Gastrocnemius medialis (tissue), 4 donors: ENCODE measurements at regions of chr3 and their contacts with region 1.

Region 1: DNA sequence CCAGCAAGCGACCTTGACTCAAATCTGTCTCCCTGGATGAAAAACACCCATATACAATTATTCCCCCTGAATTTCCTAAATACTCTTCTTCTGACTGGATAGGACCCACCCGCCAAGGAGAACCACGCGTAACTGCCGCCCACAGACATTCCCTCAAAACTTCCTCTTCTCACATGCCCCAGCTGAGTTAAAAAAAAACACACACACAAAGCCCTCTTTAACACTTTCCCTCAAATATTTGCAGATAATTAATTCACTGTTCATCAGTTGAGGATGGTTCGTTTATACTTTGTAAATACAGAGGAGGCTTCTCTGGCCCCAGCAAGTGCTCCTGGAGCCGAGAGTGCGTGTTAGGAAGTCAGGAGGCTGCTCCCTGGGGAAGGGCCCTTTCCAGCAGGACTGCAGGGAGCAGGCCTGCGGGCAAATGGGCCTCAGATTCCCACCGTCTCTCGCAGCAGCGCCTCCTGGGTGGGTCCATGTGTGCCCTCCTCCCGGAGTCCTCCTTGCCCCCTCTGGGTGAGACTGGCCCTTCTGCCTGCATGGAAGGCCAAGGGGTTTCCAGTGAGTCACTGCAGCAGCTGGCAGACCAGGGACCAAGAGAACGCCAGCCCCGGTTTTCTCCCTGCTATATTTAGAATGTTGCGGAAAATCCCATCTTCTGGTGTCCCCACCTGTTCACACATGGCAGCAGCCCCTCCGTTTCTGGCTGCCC is 46.8 kb downstream of the MGLL start:
- DNase-seq: peak in 1 of 2 donors; percentile 79
- ATAC-seq: peak; percentile 65 to 70
- H3K4me3 ChIP-seq: peak overlapping the region in 1 of 4 donors; percentile 10
- H3K27ac ChIP-seq: peak overlapping the region; percentile 76 to 87 (median 81)
- H3K4me1 ChIP-seq: peaks cover 58 to 74% of the 10 kb centered on the region in 2 donors
- H3K27me3 ChIP-seq: no peaks in the 10 kb centered on the region
- CTCF ChIP-seq: no peak
- POLR2A ChIP-seq: no peak

Region 2: DNA sequence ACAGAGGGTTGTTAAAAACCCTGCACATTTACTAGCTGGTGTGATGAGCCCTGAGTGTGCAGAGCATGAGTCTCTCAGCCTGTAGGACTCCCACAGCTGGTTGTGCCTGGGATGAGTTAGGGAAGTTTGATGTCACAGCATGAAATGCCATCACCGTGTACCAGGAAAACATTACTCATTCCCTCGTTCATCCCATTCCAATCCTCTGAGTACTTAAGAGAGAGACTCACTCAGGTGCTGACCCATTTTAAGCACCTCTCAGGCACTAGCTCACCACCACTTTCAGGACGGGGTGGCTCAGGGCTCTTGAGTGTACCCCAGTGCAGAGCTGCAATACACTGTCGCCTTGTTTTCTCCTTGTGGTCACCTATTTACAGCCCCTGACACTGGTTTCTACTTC is 28.1 kb after region 1 on chr3:
- in situ Hi-C with region 1: no loop called
- intact Hi-C with region 1: no loop called
- DNase-seq: no peak
- ATAC-seq: peak; percentile 85 to 91
- H3K4me3 ChIP-seq: no peak overlapping the region
- H3K27ac ChIP-seq: peak overlapping the region in 3 of 4 donors; percentile 14 to 18 (median 16)
- H3K4me1 ChIP-seq: peaks cover 35 to 56% of the 10 kb centered on the region in 2 donors
- H3K27me3 ChIP-seq: no peaks in the 10 kb centered on the region
- CTCF ChIP-seq: no peak
- POLR2A ChIP-seq: no peak

Region 3: GRCh38 chr3:127817396-127817841 is 41.9 kb after region 1 on chr3:
- in situ Hi-C with region 1: no loop called
- intact Hi-C with region 1: loop called (anchors 5 kb)
- DNase-seq: peak; percentile 53 to 73
- ATAC-seq: peak; percentile 97 to 98
- H3K4me3 ChIP-seq: no peak overlapping the region
- H3K27ac ChIP-seq: peak overlapping the region; percentile 80 to 92 (median 84)
- H3K4me1 ChIP-seq: peaks cover 74 to 89% of the 10 kb centered on the region in 2 donors
- H3K27me3 ChIP-seq: no peaks in the 10 kb centered on the region
- CTCF ChIP-seq: no peak
- POLR2A ChIP-seq: no peak

Region 4: GRCh38 chr3:128133273-128134084 is 357.9 kb after region 1 on chr3:
- in situ Hi-C with region 1: no loop called
- intact Hi-C with region 1: no loop called
- DNase-seq: no peak
- ATAC-seq: no peak
- H3K4me3 ChIP-seq: no peak overlapping the region
- H3K27ac ChIP-seq: no peak overlapping the region
- H3K4me1 ChIP-seq: no peaks in the 10 kb centered on the region
- H3K27me3 ChIP-seq: peaks cover 0 to 6% (median 0%) of the 10 kb centered on the region in 3 donors
- CTCF ChIP-seq: peak in 2 of 5 experiments; percentile 34 to 37
- POLR2A ChIP-seq: no peak